ENCODE measurements at regions of chr3 and their contacts with region 1.

Region 1: GRCh38 chr3:186617038-186617946 is 4.4 kb downstream of the AHSG start:
- DNase-seq: peak; percentile 84
- H3K4me3 ChIP-seq: peak overlapping the region in 1 of 2 experiments; percentile 34; a peak in 1 of 4 replicates
- H3K27ac ChIP-seq: no peak overlapping the region
- H3K4me1 ChIP-seq: peaks cover 0 to 7% of the 10 kb centered on the region in 2 experiments; a peak in 2 of 4 replicates
- H3K27me3 ChIP-seq: peaks cover 37% of the 10 kb centered on the region; the same call in 1 of the 2 replicates
- CTCF ChIP-seq: peak; percentile 85
- EP300 ChIP-seq: no peak
- RAD21 ChIP-seq: peak; percentile 69

Region 2: DNA sequence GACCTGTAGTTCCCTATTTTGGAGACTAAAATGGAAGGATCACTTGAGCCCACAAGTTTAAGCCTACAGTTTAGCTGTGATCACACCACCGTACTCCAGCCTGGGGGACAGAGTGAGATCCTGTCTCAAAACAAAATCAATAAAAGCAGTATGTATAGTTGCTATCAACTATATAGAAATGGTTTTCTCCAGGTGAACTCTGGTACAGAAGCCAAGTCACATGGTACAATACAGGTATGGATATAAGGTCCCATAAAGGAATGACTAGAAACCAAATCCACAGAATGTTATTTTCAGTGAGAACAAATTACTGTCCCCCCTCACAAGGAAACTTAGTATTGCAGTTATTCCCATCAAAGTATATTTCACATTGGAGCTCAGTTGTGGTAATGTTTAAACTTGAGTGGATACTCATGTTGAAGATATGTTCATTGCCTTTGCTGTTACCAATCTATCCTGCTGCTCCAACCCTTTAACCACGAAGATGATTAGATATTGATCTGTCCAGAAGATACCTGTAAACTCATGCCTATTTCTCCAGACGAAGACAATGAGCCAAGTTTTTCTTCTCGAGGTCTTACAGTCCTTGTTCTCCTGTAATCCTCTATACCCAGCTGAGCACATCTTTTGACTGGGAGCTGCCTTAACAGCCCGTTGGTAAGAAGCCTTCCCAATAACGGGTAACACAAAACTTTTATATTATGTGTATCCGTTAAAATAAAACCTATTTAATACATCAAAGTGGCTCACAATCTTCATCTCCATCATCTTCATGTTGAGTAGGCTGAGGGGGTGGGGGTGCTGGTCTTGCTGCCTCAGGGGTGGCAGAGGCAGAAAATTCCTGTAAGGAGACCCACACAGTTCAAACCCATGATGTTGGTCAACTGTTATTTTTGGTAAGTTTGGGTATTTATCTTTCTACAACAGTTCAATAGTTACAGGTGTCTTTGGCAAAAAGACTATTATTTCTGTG is 704.1 kb before region 1 on chr3:
- CTCF ChIA-PET with region 1: no interaction called
- POLR2A ChIA-PET with region 1: no interaction called
- DNase-seq: no peak
- H3K4me3 ChIP-seq: no peak overlapping the region
- H3K27ac ChIP-seq: peak overlapping the region in 1 of 2 experiments; percentile 6; a peak in 1 of 4 replicates
- H3K4me1 ChIP-seq: no peaks in the 10 kb centered on the region; a peak in 1 of 4 replicates
- H3K27me3 ChIP-seq: no peaks in the 10 kb centered on the region
- CTCF ChIP-seq: no peak
- EP300 ChIP-seq: no peak
- RAD21 ChIP-seq: no peak

Region 3: DNA sequence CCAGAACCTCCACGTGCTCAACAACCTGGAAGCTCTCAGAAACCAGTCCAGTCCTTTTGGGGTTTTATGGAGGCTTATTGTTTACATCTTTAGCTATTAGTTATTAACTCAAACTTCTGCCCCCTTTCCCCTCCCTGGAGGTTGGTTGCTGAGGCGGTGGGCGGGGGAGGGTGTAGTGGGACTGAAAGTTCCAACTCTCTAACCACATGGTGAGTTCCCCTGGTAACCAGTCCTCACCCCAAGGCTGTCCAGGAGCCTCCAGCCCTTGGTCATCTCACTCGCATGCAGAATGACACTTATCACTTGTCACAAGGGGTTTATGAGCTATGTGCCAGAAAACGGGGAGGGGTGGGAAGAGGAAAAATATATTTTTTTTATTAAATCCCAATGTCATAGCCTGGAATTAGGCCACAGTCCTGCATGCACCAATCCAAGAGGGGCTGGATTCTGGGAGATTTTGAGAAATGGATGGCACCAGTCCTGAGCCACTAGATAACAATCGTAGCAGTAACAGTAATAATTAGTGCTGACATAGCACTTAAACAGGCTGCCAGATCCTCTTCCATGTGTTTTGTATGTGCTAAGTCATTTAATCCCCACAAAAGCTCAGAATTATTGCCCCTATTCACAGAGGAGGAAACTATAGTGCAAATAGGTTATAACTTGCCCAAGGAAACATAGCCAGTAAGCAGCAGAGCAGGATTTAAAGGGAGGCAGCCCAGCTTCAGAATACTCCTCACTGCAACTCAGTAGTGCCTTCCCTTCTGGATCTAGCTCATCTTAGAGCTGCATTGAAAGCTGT is 158.8 kb before region 1 on chr3:
- CTCF ChIA-PET with region 1: no interaction called
- POLR2A ChIA-PET with region 1: no interaction called
- DNase-seq: no peak
- H3K4me3 ChIP-seq: no peak overlapping the region
- H3K27ac ChIP-seq: no peak overlapping the region
- H3K4me1 ChIP-seq: no peaks in the 10 kb centered on the region; a peak in 1 of 4 replicates
- H3K27me3 ChIP-seq: no peaks in the 10 kb centered on the region; the same call in 1 of the 2 replicates
- CTCF ChIP-seq: no peak
- EP300 ChIP-seq: no peak
- RAD21 ChIP-seq: no peak

Region 4: GRCh38 chr3:186589121-186589520 is 28.2 kb before region 1 on chr3:
- CTCF ChIA-PET with region 1: interaction called, 167 read pairs
- POLR2A ChIA-PET with region 1: no interaction called
- DNase-seq: no peak
- H3K4me3 ChIP-seq: no peak overlapping the region
- H3K27ac ChIP-seq: no peak overlapping the region
- H3K4me1 ChIP-seq: no peaks in the 10 kb centered on the region
- H3K27me3 ChIP-seq: no peaks in the 10 kb centered on the region
- CTCF ChIP-seq: peak; percentile 34
- EP300 ChIP-seq: no peak
- RAD21 ChIP-seq: peak; percentile 64

Region 5: DNA sequence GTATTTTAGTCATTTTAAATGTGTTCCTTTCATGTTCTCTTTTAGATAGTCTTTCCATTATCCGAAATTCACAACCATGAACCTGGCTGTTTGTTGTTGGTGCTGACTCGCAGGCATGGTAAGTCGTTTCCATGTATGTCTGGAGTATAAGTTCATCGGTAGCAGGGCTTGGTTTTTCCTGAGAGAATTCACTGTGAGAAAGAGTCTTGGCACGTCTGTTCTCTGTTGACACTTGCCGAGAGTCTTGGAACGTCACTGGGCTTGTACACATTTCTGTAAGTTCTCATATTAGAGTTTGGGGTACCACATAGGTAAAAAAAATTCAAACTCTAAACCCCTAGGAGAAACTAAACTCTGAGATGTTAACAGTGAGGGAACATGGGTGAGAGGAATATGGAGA is 136.7 kb after region 1 on chr3:
- CTCF ChIA-PET with region 1: interaction called, 18 read pairs
- POLR2A ChIA-PET with region 1: no interaction called
- DNase-seq: no peak
- H3K4me3 ChIP-seq: no peak overlapping the region
- H3K27ac ChIP-seq: no peak overlapping the region
- H3K4me1 ChIP-seq: no peaks in the 10 kb centered on the region
- H3K27me3 ChIP-seq: no peaks in the 10 kb centered on the region; the same call in 1 of the 2 replicates
- CTCF ChIP-seq: no peak
- EP300 ChIP-seq: no peak
- RAD21 ChIP-seq: no peak

Region 6: GRCh38 chr3:186806089-186807055 is 189.1 kb after region 1 on chr3 and contains the start of gene RFC4:
- CTCF ChIA-PET with region 1: interaction called, 10 read pairs
- POLR2A ChIA-PET with region 1: no interaction called
- DNase-seq: peak; percentile 88
- H3K4me3 ChIP-seq: peak within 1 kb of the TSS; percentile 75 to 89
- H3K27ac ChIP-seq: peak within 1 kb of the TSS; percentile 15 to 86
- H3K4me1 ChIP-seq: peaks cover 8 to 12% of the 10 kb centered on the region in 2 experiments; a peak in 3 of 4 replicates
- H3K27me3 ChIP-seq: no peaks in the 10 kb centered on the region
- CTCF ChIP-seq: no peak
- EP300 ChIP-seq: no peak
- RAD21 ChIP-seq: no peak
- polyA plus RNA-seq, gene RFC4: 10.7 and 13.1 TPM in 2 replicates

Region 7: GRCh38 chr3:187051719-187052366 is 434.6 kb after region 1 on chr3:
- CTCF ChIA-PET with region 1: no interaction called
- POLR2A ChIA-PET with region 1: no interaction called
- DNase-seq: no peak
- H3K4me3 ChIP-seq: no peak overlapping the region
- H3K27ac ChIP-seq: no peak overlapping the region
- H3K4me1 ChIP-seq: no peaks in the 10 kb centered on the region
- H3K27me3 ChIP-seq: no peaks in the 10 kb centered on the region
- CTCF ChIP-seq: no peak
- EP300 ChIP-seq: no peak
- RAD21 ChIP-seq: no peak

Region 8: GRCh38 chr3:187186801-187187421 is 569.6 kb after region 1 on chr3:
- CTCF ChIA-PET with region 1: no interaction called
- POLR2A ChIA-PET with region 1: no interaction called
- DNase-seq: no peak
- H3K4me3 ChIP-seq: no peak overlapping the region
- H3K27ac ChIP-seq: no peak overlapping the region
- H3K4me1 ChIP-seq: peaks cover 0 to 13% of the 10 kb centered on the region in 2 experiments; a peak in 1 of 4 replicates
- H3K27me3 ChIP-seq: no peaks in the 10 kb centered on the region
- CTCF ChIP-seq: no peak
- EP300 ChIP-seq: no peak
- RAD21 ChIP-seq: no peak

Measured in SK-N-SH (cell line).